AG04449 (cell line): ENCODE measurements at regions of chr17 and their contacts with region 1.

Region 1: DNA sequence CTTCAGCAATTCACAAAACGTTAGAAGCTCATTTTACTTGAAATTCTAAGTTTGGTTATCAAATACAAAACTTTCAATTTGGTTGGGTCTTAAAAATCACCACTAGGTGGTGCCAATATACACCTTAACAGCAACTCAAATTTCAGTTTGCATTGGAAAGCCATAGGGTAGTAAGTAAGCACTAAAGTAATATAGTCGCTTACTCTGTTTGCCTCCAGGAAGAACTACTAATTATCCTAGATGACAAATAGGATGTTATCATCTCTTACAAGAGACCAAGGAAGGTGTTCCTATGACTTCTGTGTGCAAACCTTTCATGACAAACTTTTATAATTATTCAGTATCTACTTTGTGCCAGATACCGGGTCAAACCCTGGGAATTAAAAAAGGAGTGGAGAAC is 93.3 kb downstream of the MYO1D start:
- DNase-seq: peak; percentile 19
- H3K4me3 ChIP-seq: no peak overlapping the region
- CTCF ChIP-seq: peak; percentile 47

Region 2: GRCh38 chr17:32654324-32654723 is 129.3 kb before region 1 on chr17:
- CTCF ChIA-PET with region 1: no interaction called
- POLR2A ChIA-PET with region 1: no interaction called
- DNase-seq: no peak
- H3K4me3 ChIP-seq: no peak overlapping the region
- CTCF ChIP-seq: no peak

Region 3: GRCh38 chr17:32769839-32770238 is 13.8 kb before region 1 on chr17:
- CTCF ChIA-PET with region 1: interaction called, 18 read pairs
- POLR2A ChIA-PET with region 1: no interaction called
- DNase-seq: no peak
- H3K4me3 ChIP-seq: no peak overlapping the region
- CTCF ChIP-seq: no peak

Region 4: GRCh38 chr17:32794533-32795246 is 11.1 kb after region 1 on chr17:
- CTCF ChIA-PET with region 1: interaction called, 14 read pairs
- POLR2A ChIA-PET with region 1: no interaction called
- DNase-seq: no peak
- H3K4me3 ChIP-seq: no peak overlapping the region
- CTCF ChIP-seq: no peak

Region 5: GRCh38 chr17:32909787-32910369 is 126.3 kb after region 1 on chr17:
- CTCF ChIA-PET with region 1: interaction called, 33 read pairs
- POLR2A ChIA-PET with region 1: no interaction called
- DNase-seq: peak; percentile 49
- H3K4me3 ChIP-seq: no peak overlapping the region
- CTCF ChIP-seq: peak; percentile 78

Region 6: DNA sequence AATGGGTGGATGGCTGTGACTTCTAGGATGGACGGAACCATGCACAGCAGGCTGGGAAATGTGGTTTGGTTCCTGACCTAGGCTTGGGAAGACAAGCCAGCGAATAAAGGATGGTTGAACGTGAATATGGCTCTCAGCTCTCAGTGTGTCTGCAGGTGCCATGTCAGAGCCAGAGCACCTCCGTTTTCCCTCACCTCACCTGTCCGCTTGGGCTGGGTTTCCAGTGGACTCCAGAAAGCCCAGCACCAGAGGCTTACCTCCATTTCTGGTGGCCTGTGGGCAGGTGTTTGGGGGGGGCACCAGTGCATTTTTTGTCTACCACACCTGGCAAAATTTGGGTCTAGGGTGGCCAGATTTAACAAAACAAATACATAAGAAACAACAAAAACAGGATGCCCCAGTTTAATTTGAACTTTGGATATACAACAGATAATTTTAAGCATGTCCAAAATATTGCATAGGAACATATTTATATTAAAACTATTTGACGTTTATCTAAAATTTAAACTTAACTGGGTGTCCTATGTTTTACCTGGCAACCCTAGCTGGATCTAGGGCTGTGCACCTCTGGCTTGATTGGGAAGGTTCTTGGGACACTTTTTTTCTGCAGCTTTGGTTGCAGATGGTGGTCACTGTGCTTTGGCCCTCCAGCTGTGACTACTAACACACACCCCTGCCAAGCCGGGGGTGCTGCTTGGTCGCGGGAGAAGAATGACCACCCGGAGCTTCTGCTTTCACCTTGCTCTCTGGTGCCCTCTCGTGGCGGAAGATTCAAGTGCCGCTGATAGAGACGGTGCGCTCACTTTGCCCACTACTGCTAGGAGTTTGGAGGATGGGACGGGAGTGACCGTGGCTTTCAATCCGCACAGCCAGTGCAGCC is 214.4 kb after region 1 on chr17:
- CTCF ChIA-PET with region 1: interaction called, 34 read pairs
- POLR2A ChIA-PET with region 1: no interaction called
- DNase-seq: no peak
- H3K4me3 ChIP-seq: peak overlapping the region; percentile 37
- CTCF ChIP-seq: peak; percentile 90

Region 7: GRCh38 chr17:33049781-33050414 is 266.3 kb after region 1 on chr17:
- CTCF ChIA-PET with region 1: interaction called, 12 read pairs
- POLR2A ChIA-PET with region 1: no interaction called
- DNase-seq: no peak
- H3K4me3 ChIP-seq: no peak overlapping the region
- CTCF ChIP-seq: peak; percentile 91